Activated CD4-positive, alpha-beta T cell treated with anti-CD3 and anti-CD28 coated beads for 36 hours (primary cell): ENCODE measurements at regions of chr12 and their contacts with region 1.

Region 1: DNA sequence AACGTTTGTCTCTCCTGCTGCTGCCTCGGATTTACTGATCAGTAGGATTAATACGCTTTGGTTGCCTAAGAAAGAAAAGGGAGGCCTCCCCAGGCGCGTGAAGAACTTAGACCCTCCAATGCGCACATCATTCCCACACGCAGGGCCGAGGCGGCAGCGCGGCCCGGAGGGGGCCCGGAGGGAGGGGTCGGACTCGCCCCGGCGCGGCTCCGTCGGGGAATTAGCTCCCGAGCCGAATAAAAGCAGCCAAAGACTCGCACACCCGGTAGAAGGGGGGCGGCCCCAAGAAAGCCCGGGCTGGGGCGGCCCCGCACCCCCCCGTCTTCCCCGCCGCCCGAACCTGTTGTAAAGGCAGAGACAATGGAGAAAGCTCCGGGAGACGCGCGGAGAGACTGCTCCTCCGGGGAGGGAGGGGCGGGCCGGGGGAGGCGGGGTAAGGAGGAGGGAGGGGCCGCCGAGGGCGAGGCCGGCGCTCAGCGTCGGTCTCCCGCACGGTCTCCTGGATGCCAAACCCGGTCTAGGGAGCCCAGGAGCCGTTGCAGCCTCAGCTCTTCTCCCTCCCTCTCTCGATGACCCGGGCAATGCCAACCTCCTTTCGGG is at the start of gene NELL2:
- DNase-seq: peak; percentile 86
- ATAC-seq: peak; percentile 85
- H3K4me3 Mint-ChIP-seq: peak within 1 kb of the TSS; percentile 94
- H3K27ac Mint-ChIP-seq: peak within 1 kb of the TSS; percentile 90
- H3K4me1 Mint-ChIP-seq: peaks cover 22% of the 10 kb centered on the region
- H3K27me3 Mint-ChIP-seq: peaks cover 10% of the 10 kb centered on the region
- total RNA-seq, gene NELL2: 28.4 to 35.8 TPM

Region 2: GRCh38 chr12:44774815-44775411 is 101.1 kb before region 1 on chr12:
- CTCF ChIA-PET with region 1: interaction called, 65 read pairs
- POLR2A ChIA-PET with region 1: interaction called, 3 read pairs
- intact Hi-C with region 1: loop called (anchors 1 kb)
- DNase-seq: peak; percentile 78
- ATAC-seq: no peak
- H3K4me3 Mint-ChIP-seq: no peak overlapping the region
- H3K27ac Mint-ChIP-seq: no peak overlapping the region
- H3K4me1 Mint-ChIP-seq: no peaks in the 10 kb centered on the region
- H3K27me3 Mint-ChIP-seq: no peaks in the 10 kb centered on the region

Region 3: DNA sequence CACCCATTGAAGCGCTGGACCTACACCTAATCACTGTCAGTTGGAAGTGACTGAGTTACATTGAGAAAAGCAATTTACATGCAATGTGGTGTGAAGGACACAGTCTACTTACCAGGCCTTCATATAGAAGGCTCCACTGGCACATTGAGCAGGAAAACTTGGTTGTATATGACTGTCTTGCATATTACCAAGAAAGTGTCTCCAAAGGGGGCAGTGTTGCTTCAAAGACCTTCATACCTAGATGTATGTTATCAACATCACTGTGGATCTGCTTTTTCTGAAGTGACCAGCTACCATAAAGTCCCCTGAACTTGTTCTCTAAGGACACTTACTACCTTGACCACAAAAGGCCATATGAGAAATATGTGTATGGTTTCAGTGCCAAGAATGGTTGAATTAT is 64.0 kb before region 1 on chr12:
- CTCF ChIA-PET with region 1: interaction called, 82 read pairs
- POLR2A ChIA-PET with region 1: no interaction called
- intact Hi-C with region 1: loop called (anchors 1 to 2 kb)
- DNase-seq: peak; percentile 51
- ATAC-seq: peak; percentile 84
- H3K4me3 Mint-ChIP-seq: no peak overlapping the region
- H3K27ac Mint-ChIP-seq: no peak overlapping the region
- H3K4me1 Mint-ChIP-seq: peaks cover 32% of the 10 kb centered on the region
- H3K27me3 Mint-ChIP-seq: no peaks in the 10 kb centered on the region

Region 4: DNA sequence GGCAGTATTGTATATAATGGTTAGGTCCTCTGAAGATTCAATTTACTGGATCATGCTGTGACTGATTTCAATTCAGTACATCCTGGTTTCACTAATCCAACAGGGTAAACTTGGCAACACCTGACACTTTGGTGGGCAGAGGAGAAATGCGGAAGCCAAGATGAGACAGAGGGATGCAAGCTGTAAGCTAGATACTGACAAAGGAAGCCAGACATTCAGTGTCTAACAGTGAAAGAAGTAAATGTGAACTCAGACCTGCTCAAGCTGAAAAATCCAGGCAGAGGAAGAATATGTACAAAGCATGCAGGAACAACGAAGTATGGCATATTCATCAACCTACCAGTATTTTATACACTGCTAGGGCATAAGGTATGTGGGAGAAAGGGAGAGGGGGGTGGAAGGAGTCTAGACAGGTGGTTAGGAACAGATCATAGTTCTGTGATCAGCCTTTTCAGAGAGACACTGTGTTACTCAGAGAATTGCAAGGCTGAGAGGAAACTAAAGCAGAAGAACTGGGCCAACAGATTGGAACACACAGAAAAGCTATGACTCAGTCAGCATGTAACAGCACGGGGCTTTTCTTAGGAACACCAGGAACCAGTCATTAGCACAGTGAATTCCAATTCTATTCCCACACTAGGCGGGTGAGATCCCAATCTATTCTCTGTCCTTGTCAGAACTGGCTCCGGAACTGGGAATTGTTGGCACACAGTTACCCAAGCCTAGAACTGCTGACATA is 40.2 kb before region 1 on chr12:
- CTCF ChIA-PET with region 1: interaction called, 6 read pairs
- POLR2A ChIA-PET with region 1: no interaction called
- intact Hi-C with region 1: loop called in 1 of 2 experiments (anchors 5 kb)
- DNase-seq: peak; percentile 25
- ATAC-seq: peak; percentile 88
- H3K4me3 Mint-ChIP-seq: peak overlapping the region; percentile 60
- H3K27ac Mint-ChIP-seq: peak overlapping the region; percentile 94
- H3K4me1 Mint-ChIP-seq: peaks cover 84% of the 10 kb centered on the region
- H3K27me3 Mint-ChIP-seq: no peaks in the 10 kb centered on the region

Region 5: GRCh38 chr12:44847888-44848702 is 28.0 kb before region 1 on chr12:
- CTCF ChIA-PET with region 1: interaction called, 5 read pairs
- POLR2A ChIA-PET with region 1: interaction called, 4 read pairs
- intact Hi-C with region 1: loop called in 1 of 2 experiments (anchors 1 kb)
- DNase-seq: peak; percentile 78
- ATAC-seq: peak; percentile 86
- H3K4me3 Mint-ChIP-seq: peak overlapping the region; percentile 59
- H3K27ac Mint-ChIP-seq: peak overlapping the region; percentile 96
- H3K4me1 Mint-ChIP-seq: peaks cover 80% of the 10 kb centered on the region
- H3K27me3 Mint-ChIP-seq: no peaks in the 10 kb centered on the region

Region 6: GRCh38 chr12:44863867-44864266 is 12.2 kb before region 1 on chr12:
- CTCF ChIA-PET with region 1: interaction called, 50 read pairs
- POLR2A ChIA-PET with region 1: no interaction called
- intact Hi-C with region 1: no loop called
- DNase-seq: no peak
- ATAC-seq: no peak
- H3K4me3 Mint-ChIP-seq: no peak overlapping the region
- H3K27ac Mint-ChIP-seq: peak overlapping the region; percentile 9
- H3K4me1 Mint-ChIP-seq: peaks cover 45% of the 10 kb centered on the region
- H3K27me3 Mint-ChIP-seq: no peaks in the 10 kb centered on the region

Region 7: GRCh38 chr12:45893240-45893639 is 1017.2 kb after region 1 on chr12:
- CTCF ChIA-PET with region 1: no interaction called
- POLR2A ChIA-PET with region 1: no interaction called
- intact Hi-C with region 1: no loop called
- DNase-seq: peak; percentile 23
- ATAC-seq: peak; percentile 61
- H3K4me3 Mint-ChIP-seq: no peak overlapping the region
- H3K27ac Mint-ChIP-seq: no peak overlapping the region
- H3K4me1 Mint-ChIP-seq: peaks cover 24% of the 10 kb centered on the region
- H3K27me3 Mint-ChIP-seq: no peaks in the 10 kb centered on the region